ENCODE measurements at regions of chr3 and their contacts with region 1.

Region 1: GRCh38 chr3:46629551-46630517 is 17.5 kb downstream of the FAM240A start:
- DNase-seq: peak; percentile 54 to 82 (median 71)
- H3K4me3 ChIP-seq: peak overlapping the region; percentile 33
- H3K4me3 Mint-ChIP-seq: peak overlapping the region in 6 of 7 donors; percentile 54 to 77 (median 65)
- H3K27ac ChIP-seq: no peak overlapping the region
- H3K27ac Mint-ChIP-seq: peak overlapping the region in 6 of 8 donors; percentile 41 to 92 (median 66)
- H3K4me1 ChIP-seq: peaks cover 16% of the 10 kb centered on the region
- H3K4me1 Mint-ChIP-seq: peaks cover 9 to 14% (median 12%) of the 10 kb centered on the region in 3 donors
- H3K27me3 ChIP-seq: no peaks in the 10 kb centered on the region
- H3K27me3 Mint-ChIP-seq: peaks cover 0 to 3% of the 10 kb centered on the region in 2 donors

Region 2: GRCh38 chr3:46496741-46497554 is 132.9 kb before region 1 on chr3:
- CTCF ChIA-PET with region 1: interaction called, 147 read pairs
- POLR2A ChIA-PET with region 1: no interaction called
- DNase-seq: peak in 4 of 5 donors; percentile 16 to 70 (median 26)
- H3K4me3 ChIP-seq: no peak overlapping the region
- H3K4me3 Mint-ChIP-seq: no peak overlapping the region
- H3K27ac ChIP-seq: no peak overlapping the region
- H3K27ac Mint-ChIP-seq: peak overlapping the region in 2 of 8 donors; percentile 33 to 60
- H3K4me1 ChIP-seq: peaks cover 5% of the 10 kb centered on the region
- H3K4me1 Mint-ChIP-seq: peaks cover 4 to 20% (median 19%) of the 10 kb centered on the region in 3 donors
- H3K27me3 ChIP-seq: no peaks in the 10 kb centered on the region
- H3K27me3 Mint-ChIP-seq: no peaks in the 10 kb centered on the region

Region 3: DNA sequence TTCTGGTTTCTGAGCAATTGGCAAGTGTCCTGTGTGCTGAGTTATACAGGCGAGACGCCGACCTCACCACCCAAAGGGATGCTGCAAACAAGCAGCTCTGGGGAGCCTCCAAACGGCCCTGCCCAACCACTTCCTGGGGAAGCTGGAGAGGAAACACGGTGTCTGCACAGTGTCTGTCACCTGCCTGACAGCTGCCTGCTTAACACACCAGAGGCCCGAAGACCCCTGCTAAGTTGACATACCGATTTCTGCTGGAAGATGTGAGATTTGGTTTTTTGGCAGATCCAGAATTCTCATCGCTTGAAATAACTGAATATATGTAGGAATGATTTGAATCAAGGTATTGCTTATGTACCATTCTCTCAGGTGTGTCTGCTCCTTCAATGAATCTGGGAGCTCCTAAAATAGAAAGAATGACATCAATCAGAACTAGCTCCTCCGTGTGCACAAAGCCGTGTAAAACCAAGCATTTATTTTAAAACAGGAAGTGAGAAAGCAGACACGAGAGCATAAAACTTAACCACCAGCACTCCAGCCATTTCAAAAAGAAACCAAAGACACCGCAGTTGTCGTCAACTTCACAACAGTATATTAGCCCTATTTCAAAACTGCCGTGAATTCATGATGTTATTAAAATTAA is 90.9 kb before region 1 on chr3:
- CTCF ChIA-PET with region 1: interaction called, 15 read pairs
- POLR2A ChIA-PET with region 1: no interaction called
- DNase-seq: peak; percentile 79 to 96 (median 87)
- H3K4me3 ChIP-seq: peak overlapping the region; percentile 37
- H3K4me3 Mint-ChIP-seq: peak overlapping the region; percentile 57 to 79 (median 71)
- H3K27ac ChIP-seq: peak overlapping the region; percentile 58
- H3K27ac Mint-ChIP-seq: peak overlapping the region; percentile 85 to 99 (median 94)
- H3K4me1 ChIP-seq: peaks cover 44% of the 10 kb centered on the region
- H3K4me1 Mint-ChIP-seq: peaks cover 37 to 76% (median 71%) of the 10 kb centered on the region in 3 donors
- H3K27me3 ChIP-seq: no peaks in the 10 kb centered on the region
- H3K27me3 Mint-ChIP-seq: peaks cover 0 to 6% of the 10 kb centered on the region in 2 donors

Region 4: GRCh38 chr3:46558184-46559043 is 71.4 kb before region 1 on chr3:
- CTCF ChIA-PET with region 1: interaction called, 24 read pairs
- POLR2A ChIA-PET with region 1: no interaction called
- DNase-seq: peak; percentile 35 to 88 (median 68)
- H3K4me3 ChIP-seq: peak overlapping the region; percentile 56
- H3K4me3 Mint-ChIP-seq: peak overlapping the region; percentile 11 to 83 (median 71)
- H3K27ac ChIP-seq: no peak overlapping the region
- H3K27ac Mint-ChIP-seq: peak overlapping the region in 5 of 8 donors; percentile 21 to 54 (median 47)
- H3K4me1 ChIP-seq: peaks cover 11% of the 10 kb centered on the region
- H3K4me1 Mint-ChIP-seq: peaks cover 9 to 24% (median 24%) of the 10 kb centered on the region in 3 donors
- H3K27me3 ChIP-seq: no peaks in the 10 kb centered on the region
- H3K27me3 Mint-ChIP-seq: peaks cover 3 to 6% of the 10 kb centered on the region in 2 donors

Measured in CD8-positive, alpha-beta memory T cell (primary cell).